GM12878 (cell line): ENCODE measurements at regions of chr5 and their contacts with region 1.

Region 1: DNA sequence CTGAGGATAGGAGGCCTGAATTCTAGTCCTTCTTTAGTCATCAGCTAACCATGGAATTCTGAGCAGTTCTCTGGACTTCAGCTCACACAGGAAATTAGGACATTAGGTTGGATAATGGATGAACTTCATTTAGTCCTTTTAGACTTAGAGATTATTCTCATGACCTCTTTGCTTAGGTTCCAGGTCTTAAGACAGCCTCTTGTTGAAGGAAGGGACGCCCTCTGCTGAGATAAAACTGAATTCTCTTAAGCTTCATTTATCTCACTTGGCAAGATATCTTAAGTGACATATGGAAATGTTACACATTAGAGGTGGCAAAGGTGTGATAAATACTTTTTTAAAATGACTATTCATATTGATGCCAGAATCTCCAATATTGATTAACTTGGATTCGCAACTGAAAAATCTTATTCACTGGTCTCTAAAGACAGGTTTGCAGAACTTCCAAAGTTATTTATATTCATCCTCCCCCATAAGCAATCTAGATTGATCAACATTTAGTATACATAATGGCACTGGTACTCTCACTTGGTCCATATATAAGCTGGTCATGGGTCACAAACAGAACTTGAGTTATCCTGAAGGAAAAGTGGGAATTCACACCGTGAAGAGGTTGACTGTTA is 16.9 kb upstream of the ZNF366 start:
- DNase-seq: peak; percentile 52
- ATAC-seq: peak; percentile 94
- H3K4me3 ChIP-seq: no peak overlapping the region
- H3K27ac ChIP-seq: no peak overlapping the region
- H3K4me1 ChIP-seq: no peaks in the 10 kb centered on the region
- H3K27me3 ChIP-seq: no peaks in the 10 kb centered on the region
- CTCF ChIP-seq: peak; percentile 50 to 86 (median 66); a peak in 5 of 6 replicates
- EP300 ChIP-seq: no peak; a peak in 1 of 4 replicates
- POLR2A ChIP-seq: no peak
- RAD21 ChIP-seq: peak; percentile 99

Region 2: DNA sequence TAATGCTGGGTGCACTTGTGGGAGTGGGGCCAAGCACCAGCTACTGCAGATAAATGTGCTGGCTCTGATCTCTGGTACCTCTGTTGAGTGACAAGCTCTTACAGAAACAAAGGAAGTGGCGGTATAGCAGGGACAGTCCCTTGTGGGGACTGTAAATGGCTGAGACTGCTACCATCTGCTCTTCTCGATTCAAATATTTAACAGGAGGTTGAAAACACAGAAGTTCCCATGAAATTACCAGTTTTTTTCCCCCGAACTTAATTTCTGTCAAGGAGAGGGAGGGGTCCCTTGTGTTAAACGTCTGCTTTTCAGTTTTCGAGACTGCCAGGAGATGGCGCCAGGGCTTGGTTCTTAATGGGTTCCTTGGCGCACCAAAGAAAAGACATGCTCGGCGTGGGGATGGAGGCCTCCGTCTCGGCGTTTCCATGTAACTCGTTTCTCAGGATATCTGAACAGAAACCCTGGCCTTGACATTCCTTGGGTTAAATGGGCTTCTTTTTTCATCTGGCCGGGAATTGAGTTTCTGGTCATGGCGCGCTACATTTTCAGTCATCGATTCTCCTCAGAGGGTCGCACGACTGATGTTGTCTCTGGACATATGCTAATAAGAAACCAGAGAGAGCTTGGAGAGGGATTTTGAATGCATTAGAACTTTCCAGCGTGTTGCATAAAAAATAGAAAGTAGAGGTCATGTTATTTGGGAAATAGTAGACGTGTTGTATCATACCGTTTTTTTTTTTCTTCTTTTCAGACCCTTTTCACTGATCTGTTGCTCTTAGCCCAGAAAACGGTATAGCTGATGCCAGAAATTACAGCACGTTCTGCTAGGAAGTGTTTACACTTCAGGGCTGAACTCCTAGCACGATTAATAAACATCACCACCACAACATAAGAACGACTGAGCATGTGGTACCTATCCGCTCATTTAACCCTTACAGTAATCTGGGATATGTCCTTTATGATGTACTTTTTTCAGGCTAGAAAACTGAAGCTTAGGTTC is 741.0 kb before region 1 on chr5:
- CTCF ChIA-PET with region 1: interaction called, 4 read pairs
- POLR2A ChIA-PET with region 1: no interaction called
- RAD21 ChIA-PET with region 1: no interaction called
- SMC1A ChIA-PET with region 1: interaction called, 3 read pairs
- in situ Hi-C with region 1: loop called (anchors 25 kb)
- intact Hi-C with region 1: no loop called
- DNase-seq: peak; percentile 60
- ATAC-seq: peak; percentile 95
- H3K4me3 ChIP-seq: peak overlapping the region; percentile 1; the same call in 1 of the 2 replicates
- H3K27ac ChIP-seq: no peak overlapping the region; the same call in 1 of the 2 replicates
- H3K4me1 ChIP-seq: peaks cover 15% of the 10 kb centered on the region
- H3K27me3 ChIP-seq: no peaks in the 10 kb centered on the region; a peak in 1 of 4 replicates
- CTCF ChIP-seq: peak; percentile 61 to 71 (median 70)
- EP300 ChIP-seq: no peak; a peak in 1 of 4 replicates
- POLR2A ChIP-seq: no peak
- RAD21 ChIP-seq: peak; percentile 72

Region 3: DNA sequence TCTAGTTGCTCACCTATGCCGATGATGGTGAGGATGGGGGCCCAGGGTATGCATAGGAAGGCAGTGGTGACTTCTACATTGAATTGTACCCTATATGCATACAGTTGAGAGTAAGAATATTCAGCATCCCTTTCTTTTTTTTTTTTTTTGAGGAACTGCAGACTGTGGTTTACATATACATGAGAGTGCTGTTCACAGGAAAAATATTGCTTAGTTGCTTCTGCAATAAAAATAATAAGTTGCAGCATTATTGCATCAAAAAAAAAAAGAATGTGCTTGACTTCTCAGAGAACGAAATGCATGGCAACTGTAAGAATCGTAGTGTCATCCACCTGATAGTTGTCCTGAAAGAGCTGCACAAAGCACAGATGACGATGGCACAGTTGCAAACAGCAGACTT is 151.1 kb before region 1 on chr5:
- CTCF ChIA-PET with region 1: interaction called, 238 read pairs
- POLR2A ChIA-PET with region 1: interaction called, 3 read pairs
- RAD21 ChIA-PET with region 1: interaction called, 159 read pairs
- SMC1A ChIA-PET with region 1: interaction called, 214 read pairs
- in situ Hi-C with region 1: loop called (anchors 10 kb)
- intact Hi-C with region 1: no loop called
- DNase-seq: no peak
- ATAC-seq: no peak
- H3K4me3 ChIP-seq: no peak overlapping the region
- H3K27ac ChIP-seq: no peak overlapping the region
- H3K4me1 ChIP-seq: peaks cover 22% of the 10 kb centered on the region
- H3K27me3 ChIP-seq: no peaks in the 10 kb centered on the region
- CTCF ChIP-seq: no peak
- EP300 ChIP-seq: no peak
- POLR2A ChIP-seq: no peak
- RAD21 ChIP-seq: no peak

Region 4: DNA sequence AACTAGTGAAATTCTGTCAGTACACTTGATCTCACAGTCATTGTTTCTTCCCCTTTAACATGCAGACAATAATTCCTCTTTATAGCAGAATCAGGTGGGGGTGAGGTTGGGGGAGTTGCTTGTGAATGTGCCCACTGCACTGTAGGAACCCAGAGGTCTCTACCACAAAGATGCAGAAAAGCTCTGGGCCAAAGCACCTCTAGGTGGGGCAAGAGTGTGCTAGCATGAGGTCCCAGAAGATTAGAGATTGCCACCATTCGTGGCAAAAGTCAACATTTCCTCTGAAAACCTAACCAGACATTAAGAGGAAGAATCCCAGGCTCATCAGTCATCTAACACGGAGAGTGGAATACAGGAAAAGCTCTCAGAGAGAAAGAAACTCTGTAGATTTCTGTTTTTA is 129.4 kb before region 1 on chr5:
- CTCF ChIA-PET with region 1: interaction called, 323 read pairs
- POLR2A ChIA-PET with region 1: interaction called, 3 read pairs
- RAD21 ChIA-PET with region 1: interaction called, 122 read pairs
- SMC1A ChIA-PET with region 1: interaction called, 159 read pairs
- in situ Hi-C with region 1: no loop called
- intact Hi-C with region 1: loop called (anchors 1 kb)
- DNase-seq: no peak
- ATAC-seq: peak; percentile 89
- H3K4me3 ChIP-seq: no peak overlapping the region
- H3K27ac ChIP-seq: no peak overlapping the region
- H3K4me1 ChIP-seq: no peaks in the 10 kb centered on the region
- H3K27me3 ChIP-seq: no peaks in the 10 kb centered on the region
- CTCF ChIP-seq: peak; percentile 70 to 74 (median 74)
- EP300 ChIP-seq: no peak
- POLR2A ChIP-seq: no peak
- RAD21 ChIP-seq: peak; percentile 84

Region 5: GRCh38 chr5:72441861-72442540 is 82.1 kb before region 1 on chr5:
- CTCF ChIA-PET with region 1: interaction called, 5 read pairs
- POLR2A ChIA-PET with region 1: no interaction called
- RAD21 ChIA-PET with region 1: interaction called, 11 read pairs
- SMC1A ChIA-PET with region 1: interaction called, 21 read pairs
- in situ Hi-C with region 1: no loop called
- intact Hi-C with region 1: no loop called
- DNase-seq: no peak
- ATAC-seq: peak; percentile 13; the same call in 2 of the 3 replicates
- H3K4me3 ChIP-seq: no peak overlapping the region
- H3K27ac ChIP-seq: no peak overlapping the region
- H3K4me1 ChIP-seq: peaks cover 41% of the 10 kb centered on the region
- H3K27me3 ChIP-seq: no peaks in the 10 kb centered on the region
- CTCF ChIP-seq: no peak
- EP300 ChIP-seq: no peak
- POLR2A ChIP-seq: no peak
- RAD21 ChIP-seq: no peak

Region 6: DNA sequence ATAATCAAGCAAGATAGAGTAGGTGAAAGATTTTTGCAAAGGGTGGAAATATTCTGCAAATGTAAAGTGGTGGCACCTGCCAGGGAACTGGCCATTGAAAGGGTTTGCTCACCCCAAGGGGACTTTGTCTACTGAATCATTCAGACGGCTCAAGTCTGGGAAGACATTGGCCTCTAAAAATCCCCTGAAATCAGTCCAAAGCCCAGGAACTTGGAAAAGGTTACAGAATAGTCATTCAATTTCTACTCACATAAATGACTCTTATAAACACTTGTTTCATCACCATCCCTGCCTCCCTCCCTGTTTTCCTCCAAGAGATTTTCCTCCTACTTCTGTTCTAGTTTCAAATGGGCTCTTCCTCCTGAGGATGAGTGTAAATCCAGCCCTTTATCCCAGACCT is 45.4 kb before region 1 on chr5:
- CTCF ChIA-PET with region 1: interaction called, 11 read pairs
- POLR2A ChIA-PET with region 1: no interaction called
- RAD21 ChIA-PET with region 1: interaction called, 5 read pairs
- SMC1A ChIA-PET with region 1: interaction called, 20 read pairs
- in situ Hi-C with region 1: no loop called
- intact Hi-C with region 1: no loop called
- DNase-seq: no peak
- ATAC-seq: no peak
- H3K4me3 ChIP-seq: no peak overlapping the region
- H3K27ac ChIP-seq: no peak overlapping the region
- H3K4me1 ChIP-seq: peaks cover 31% of the 10 kb centered on the region
- H3K27me3 ChIP-seq: no peaks in the 10 kb centered on the region
- CTCF ChIP-seq: no peak
- EP300 ChIP-seq: no peak
- POLR2A ChIP-seq: no peak
- RAD21 ChIP-seq: no peak

Region 7: GRCh38 chr5:72816311-72817145 is 292.5 kb after region 1 on chr5 and contains the start of gene TNPO1:
- CTCF ChIA-PET with region 1: interaction called, 10 read pairs
- POLR2A ChIA-PET with region 1: no interaction called
- RAD21 ChIA-PET with region 1: interaction called, 9 read pairs
- SMC1A ChIA-PET with region 1: interaction called, 8 read pairs
- in situ Hi-C with region 1: no loop called
- intact Hi-C with region 1: no loop called
- DNase-seq: peak; percentile 45
- ATAC-seq: peak; percentile 93
- H3K4me3 ChIP-seq: peak within 1 kb of the TSS; percentile 64
- H3K27ac ChIP-seq: peak within 1 kb of the TSS; percentile 91
- H3K4me1 ChIP-seq: 0 out of 2 replicates have a peak, but pooled peaks cover 2% of the 10 kb centered on the region
- H3K27me3 ChIP-seq: no peaks in the 10 kb centered on the region
- CTCF ChIP-seq: no peak
- EP300 ChIP-seq: no peak
- POLR2A ChIP-seq: peak; percentile 91
- RAD21 ChIP-seq: no peak
- polyA plus RNA-seq, gene TNPO1: 18.1 to 37.3 TPM